Thyroid gland (tissue), 4 donors: ENCODE measurements at regions of chr1 and their contacts with region 1.

Region 1: DNA sequence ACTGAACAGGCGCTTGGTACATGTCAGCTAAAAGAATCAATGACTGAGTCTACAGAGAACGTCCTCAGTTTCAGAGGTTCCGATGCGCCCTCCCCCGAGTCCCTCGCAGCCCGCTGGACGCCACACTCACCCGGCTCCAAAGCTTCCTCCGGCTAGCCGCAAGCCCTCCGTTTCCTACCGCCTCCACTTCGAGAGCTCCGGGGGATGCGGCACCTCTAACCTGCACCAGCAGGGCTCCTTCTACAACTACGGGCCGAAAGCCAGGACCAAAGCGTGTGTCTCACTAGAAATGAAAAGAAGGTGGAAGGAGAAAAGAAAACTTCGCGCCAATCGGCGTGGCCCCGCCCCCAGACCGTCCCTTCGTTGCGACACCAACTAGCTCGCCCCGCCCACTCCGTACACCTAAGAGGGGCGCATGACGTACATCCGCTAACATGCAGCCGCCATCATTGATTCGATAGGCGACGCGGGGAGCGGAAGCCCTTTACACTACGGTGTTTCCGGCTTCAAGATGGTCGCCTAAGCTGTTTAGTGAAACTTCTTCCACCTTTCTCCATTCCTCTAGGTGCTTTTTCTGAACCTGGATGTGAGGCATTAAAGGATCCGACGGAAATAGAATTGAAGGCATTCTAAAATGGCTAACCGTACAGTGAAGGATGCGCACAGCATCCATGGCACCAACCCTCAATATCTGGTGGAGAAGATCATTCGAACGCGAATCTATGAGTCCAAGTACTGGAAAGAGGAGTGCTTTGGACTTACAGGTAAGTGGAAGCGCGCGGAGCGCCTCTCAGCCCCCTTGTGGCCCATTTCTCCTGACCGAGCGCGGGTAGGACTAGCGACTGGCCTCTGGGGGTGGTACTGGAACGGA is at the starts of genes ORC1 and PRPF38A:
- DNase-seq: peak; percentile 98 to 99
- H3K4me3 ChIP-seq: peak within 1 kb of the TSS; percentile 70 to 80 (median 78)
- H3K27ac ChIP-seq: peak within 1 kb of the TSS; percentile 82 to 88 (median 83)
- H3K4me1 ChIP-seq: peaks cover 15 to 17% of the 10 kb centered on the region in 2 donors
- H3K27me3 ChIP-seq: no peaks in the 10 kb centered on the region
- CTCF ChIP-seq: peak in 5 of 6 experiments; percentile 34 to 86 (median 52)
- POLR2A ChIP-seq: peak in 1 of 2 donors; percentile 66
- total RNA-seq, gene ORC1: 0.22 to 1.2 (median 0.81) TPM
- total RNA-seq, gene PRPF38A: 19.9 to 31.3 (median 21.7) TPM

Region 2: DNA sequence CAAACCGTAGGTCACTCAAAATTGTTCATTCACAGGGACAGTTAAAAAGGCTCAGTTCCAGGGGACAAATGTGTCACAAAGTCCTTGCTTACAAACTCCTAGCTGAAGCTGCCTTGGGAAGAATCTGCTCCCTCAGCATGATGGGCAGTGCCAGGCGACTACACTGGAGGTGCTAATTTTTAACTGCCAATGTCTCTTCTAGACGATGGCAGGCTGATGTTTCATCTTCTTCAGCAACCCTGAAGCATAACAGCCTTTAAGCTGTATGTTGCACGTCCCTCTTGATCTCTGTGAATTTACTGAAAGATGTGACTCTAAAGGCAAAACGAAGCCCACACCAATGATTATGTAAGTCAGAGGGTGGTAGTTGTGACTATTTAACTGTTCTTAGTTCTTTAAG is 282.5 kb after region 1 on chr1:
- intact Hi-C with region 1: loop called (anchors 5 kb)
- DNase-seq: no peak
- H3K4me3 ChIP-seq: no peak overlapping the region
- H3K27ac ChIP-seq: no peak overlapping the region
- H3K4me1 ChIP-seq: no peaks in the 10 kb centered on the region
- H3K27me3 ChIP-seq: no peaks in the 10 kb centered on the region
- CTCF ChIP-seq: no peak
- POLR2A ChIP-seq: no peak